ENCODE measurements at regions of chr5 and their contacts with region 1.

Region 1: DNA sequence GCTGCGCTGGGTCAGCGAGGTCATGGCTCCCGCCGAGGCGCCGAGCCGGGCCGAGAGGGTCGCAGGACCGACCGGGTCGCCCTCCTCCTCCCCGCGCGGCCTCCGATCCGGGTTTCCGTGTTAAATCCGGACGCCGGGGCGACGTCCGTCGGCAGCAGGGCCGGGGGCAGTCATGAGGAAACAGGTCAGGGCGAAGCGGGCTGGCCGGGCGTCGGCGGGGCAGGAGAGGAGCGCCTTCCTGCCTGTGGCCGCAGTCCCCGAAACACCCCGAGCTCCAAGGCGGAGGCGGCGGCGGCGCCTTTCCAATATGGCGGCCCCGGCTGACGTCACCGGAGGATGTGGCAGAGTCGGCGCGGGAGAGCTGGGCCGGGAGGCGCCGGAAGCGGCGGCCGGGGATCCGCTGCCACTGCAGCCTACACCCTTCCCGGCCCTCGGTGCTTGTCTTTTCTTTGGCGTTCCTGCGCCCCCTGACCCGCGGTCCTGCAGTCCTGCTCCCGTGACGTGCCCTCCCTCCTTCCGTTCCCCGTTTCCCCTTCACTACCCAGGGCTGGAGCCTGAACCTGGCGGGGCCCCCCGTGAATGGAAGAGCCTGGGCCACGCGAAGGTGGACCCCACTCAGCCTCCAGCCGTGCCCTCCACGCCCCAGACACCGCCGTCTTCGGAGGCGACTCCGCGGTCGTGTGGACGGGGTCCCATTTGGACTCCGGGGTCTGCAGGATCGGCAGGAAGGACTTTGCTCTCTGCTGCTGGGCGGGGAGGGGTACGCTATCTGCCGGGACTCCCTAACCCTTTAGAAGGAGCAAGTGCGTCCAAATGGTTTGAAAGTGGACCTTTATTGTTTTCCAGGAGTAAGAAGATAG is at the start of gene GOLPH3:
- DNase-seq: peak; percentile 87 to 96 (median 92)
- ATAC-seq: peak; percentile 94
- H3K4me3 ChIP-seq: peak within 1 kb of the TSS; percentile 87
- H3K4me3 Mint-ChIP-seq: peak within 1 kb of the TSS; percentile 85 to 100 (median 98)
- H3K27ac ChIP-seq: peak within 1 kb of the TSS; percentile 100
- H3K27ac Mint-ChIP-seq: peak within 1 kb of the TSS; percentile 94 to 99 (median 99)
- H3K4me1 ChIP-seq: peaks cover 5 to 8% of the 10 kb centered on the region in 2 donors
- H3K4me1 Mint-ChIP-seq: peaks cover 21 to 46% (median 34%) of the 10 kb centered on the region in 7 donors
- H3K27me3 ChIP-seq: no peaks in the 10 kb centered on the region
- H3K27me3 Mint-ChIP-seq: peaks cover 0 to 6% (median 3%) of the 10 kb centered on the region in 5 donors
- total RNA-seq, gene GOLPH3: 46.9 to 66.5 (median 60.1) TPM

Region 2: GRCh38 chr5:30991462-30991861 is 1182.8 kb before region 1 on chr5:
- CTCF ChIA-PET with region 1: no interaction called
- POLR2A ChIA-PET with region 1: no interaction called
- intact Hi-C with region 1: no loop called
- DNase-seq: no peak
- ATAC-seq: no peak
- H3K4me3 ChIP-seq: no peak overlapping the region
- H3K4me3 Mint-ChIP-seq: no peak overlapping the region
- H3K27ac ChIP-seq: no peak overlapping the region
- H3K27ac Mint-ChIP-seq: no peak overlapping the region
- H3K4me1 ChIP-seq: no peaks in the 10 kb centered on the region
- H3K4me1 Mint-ChIP-seq: no peaks in the 10 kb centered on the region
- H3K27me3 ChIP-seq: no peaks in the 10 kb centered on the region
- H3K27me3 Mint-ChIP-seq: no peaks in the 10 kb centered on the region

Region 3: DNA sequence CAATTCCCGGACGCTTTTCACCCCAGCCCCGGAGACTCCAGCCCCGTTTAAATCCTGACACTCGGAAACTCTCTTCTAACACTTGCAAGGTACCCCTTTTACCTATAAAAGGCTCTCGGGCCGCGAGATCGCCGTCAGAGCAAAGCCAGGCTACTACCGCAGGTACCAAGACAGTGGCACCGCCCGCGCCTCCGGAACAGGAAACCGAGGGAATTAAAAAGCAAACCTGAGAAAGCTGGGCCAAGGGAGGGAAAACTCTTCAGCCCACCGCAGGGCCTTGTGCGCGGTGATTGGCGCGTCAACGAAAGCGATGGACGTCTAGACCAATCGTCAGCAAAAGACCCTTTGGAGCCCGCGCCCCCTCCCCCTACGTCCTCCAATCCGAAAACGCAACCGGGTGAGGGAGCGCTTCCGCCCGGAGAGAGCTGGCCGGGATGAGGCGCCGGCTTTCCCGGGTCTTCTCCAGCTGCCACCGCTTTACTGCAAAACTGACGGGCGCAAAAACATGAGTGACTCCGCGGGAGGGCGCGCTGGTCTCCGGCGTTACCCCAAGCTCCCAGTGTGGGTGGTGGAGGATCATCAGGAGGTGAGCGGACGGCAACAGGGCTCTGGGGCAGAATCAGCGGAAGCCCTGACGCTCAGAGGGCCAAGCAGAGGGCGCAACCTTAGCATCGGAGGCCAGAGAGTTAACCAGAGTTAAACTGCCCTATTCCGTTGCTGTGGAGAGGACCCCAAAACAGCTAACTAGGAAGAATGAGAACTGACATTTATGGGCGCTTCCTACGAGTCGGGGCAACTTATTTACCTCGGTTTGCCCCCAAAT is 642.1 kb before region 1 on chr5 and contains the starts of genes C5orf22 and DROSHA:
- CTCF ChIA-PET with region 1: no interaction called
- POLR2A ChIA-PET with region 1: interaction called, 3 read pairs
- intact Hi-C with region 1: loop called (anchors 1 kb)
- DNase-seq: peak; percentile 72 to 90 (median 88)
- ATAC-seq: peak; percentile 99
- H3K4me3 ChIP-seq: peak within 1 kb of the TSS; percentile 97
- H3K4me3 Mint-ChIP-seq: peak within 1 kb of the TSS; percentile 93 to 100 (median 98)
- H3K27ac ChIP-seq: peak within 1 kb of the TSS; percentile 89
- H3K27ac Mint-ChIP-seq: peak within 1 kb of the TSS; percentile 83 to 96 (median 90)
- H3K4me1 ChIP-seq: peaks cover 13 to 24% of the 10 kb centered on the region in 2 donors
- H3K4me1 Mint-ChIP-seq: peaks cover 29 to 85% (median 73%) of the 10 kb centered on the region in 7 donors
- H3K27me3 ChIP-seq: no peaks in the 10 kb centered on the region
- H3K27me3 Mint-ChIP-seq: no peaks in the 10 kb centered on the region
- total RNA-seq, gene C5orf22: 10.6 to 31.3 (median 30.6) TPM
- total RNA-seq, gene DROSHA: 48.5 to 92.0 (median 75.7) TPM

Region 4: DNA sequence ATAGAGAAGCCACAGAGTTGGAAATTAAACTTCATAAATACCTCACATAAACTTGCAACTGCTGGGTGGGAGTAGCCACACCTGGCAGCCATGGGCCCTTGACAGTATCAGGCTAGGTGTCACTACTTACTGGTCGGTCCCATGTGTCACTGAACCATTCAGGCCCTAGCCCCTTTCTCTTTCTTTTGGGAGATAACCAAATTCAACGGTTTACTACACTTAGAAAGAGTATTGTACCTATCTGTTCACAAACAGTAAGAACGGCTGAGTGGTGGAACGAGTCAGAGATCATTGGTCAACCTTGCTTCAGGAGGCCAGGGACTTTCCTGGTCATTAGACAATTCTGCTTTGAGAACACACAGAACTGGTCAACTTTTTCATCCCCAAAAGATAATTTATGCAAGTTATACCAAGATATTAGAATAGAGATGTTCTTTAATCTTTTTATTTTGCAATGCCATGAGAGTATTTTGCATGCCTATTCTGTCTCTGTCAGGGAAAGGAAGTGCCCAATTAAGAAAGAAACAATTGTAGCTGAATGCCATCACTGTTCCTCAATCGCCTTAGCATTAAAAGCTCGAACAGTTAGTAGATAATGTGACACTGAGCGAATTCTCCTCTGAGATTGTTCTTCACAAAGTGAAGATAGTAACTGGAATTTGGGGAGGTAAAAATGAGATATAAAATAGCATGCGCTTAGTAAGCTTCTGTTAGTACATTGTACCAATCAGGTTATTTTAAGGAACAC is 51.0 kb before region 1 on chr5:
- CTCF ChIA-PET with region 1: no interaction called
- POLR2A ChIA-PET with region 1: no interaction called
- intact Hi-C with region 1: loop called (anchors 5 to 10 kb)
- DNase-seq: no peak
- ATAC-seq: no peak
- H3K4me3 ChIP-seq: no peak overlapping the region
- H3K4me3 Mint-ChIP-seq: no peak overlapping the region
- H3K27ac ChIP-seq: no peak overlapping the region
- H3K27ac Mint-ChIP-seq: peak overlapping the region in 3 of 9 donors; percentile 6 to 50 (median 7)
- H3K4me1 ChIP-seq: peaks cover 0 to 3% of the 10 kb centered on the region in 2 donors
- H3K4me1 Mint-ChIP-seq: peaks cover 9 to 30% (median 20%) of the 10 kb centered on the region in 7 donors
- H3K27me3 ChIP-seq: no peaks in the 10 kb centered on the region
- H3K27me3 Mint-ChIP-seq: no peaks in the 10 kb centered on the region

Region 5: GRCh38 chr5:32232441-32233219 is 58.4 kb after region 1 on chr5:
- CTCF ChIA-PET with region 1: interaction called, 3 read pairs
- POLR2A ChIA-PET with region 1: interaction called, 4 read pairs
- intact Hi-C with region 1: loop called (anchors 1 to 2 kb)
- DNase-seq: peak; percentile 45 to 73 (median 64)
- ATAC-seq: peak; percentile 88
- H3K4me3 ChIP-seq: no peak overlapping the region
- H3K4me3 Mint-ChIP-seq: no peak overlapping the region
- H3K27ac ChIP-seq: no peak overlapping the region
- H3K27ac Mint-ChIP-seq: peak overlapping the region; percentile 45 to 71 (median 62)
- H3K4me1 ChIP-seq: no peaks in the 10 kb centered on the region
- H3K4me1 Mint-ChIP-seq: peaks cover 0 to 12% (median 7%) of the 10 kb centered on the region in 7 donors
- H3K27me3 ChIP-seq: no peaks in the 10 kb centered on the region
- H3K27me3 Mint-ChIP-seq: no peaks in the 10 kb centered on the region

Region 6: GRCh38 chr5:32312647-32313523 is 138.6 kb after region 1 on chr5 and contains the start of gene MTMR12:
- CTCF ChIA-PET with region 1: no interaction called
- POLR2A ChIA-PET with region 1: interaction called, 11 read pairs
- intact Hi-C with region 1: loop called (anchors 1 kb)
- DNase-seq: peak; percentile 99 to 100 (median 100)
- ATAC-seq: peak; percentile 96
- H3K4me3 ChIP-seq: peak within 1 kb of the TSS; percentile 72
- H3K4me3 Mint-ChIP-seq: peak within 1 kb of the TSS; percentile 89 to 98 (median 92)
- H3K27ac ChIP-seq: peak within 1 kb of the TSS; percentile 79
- H3K27ac Mint-ChIP-seq: peak within 1 kb of the TSS; percentile 88 to 98 (median 95)
- H3K4me1 ChIP-seq: peaks cover 9 to 14% of the 10 kb centered on the region in 2 donors
- H3K4me1 Mint-ChIP-seq: peaks cover 30 to 43% (median 38%) of the 10 kb centered on the region in 7 donors
- H3K27me3 ChIP-seq: no peaks in the 10 kb centered on the region
- H3K27me3 Mint-ChIP-seq: no peaks in the 10 kb centered on the region
- total RNA-seq, gene MTMR12: 19.0 to 28.2 (median 24.0) TPM

Region 7: DNA sequence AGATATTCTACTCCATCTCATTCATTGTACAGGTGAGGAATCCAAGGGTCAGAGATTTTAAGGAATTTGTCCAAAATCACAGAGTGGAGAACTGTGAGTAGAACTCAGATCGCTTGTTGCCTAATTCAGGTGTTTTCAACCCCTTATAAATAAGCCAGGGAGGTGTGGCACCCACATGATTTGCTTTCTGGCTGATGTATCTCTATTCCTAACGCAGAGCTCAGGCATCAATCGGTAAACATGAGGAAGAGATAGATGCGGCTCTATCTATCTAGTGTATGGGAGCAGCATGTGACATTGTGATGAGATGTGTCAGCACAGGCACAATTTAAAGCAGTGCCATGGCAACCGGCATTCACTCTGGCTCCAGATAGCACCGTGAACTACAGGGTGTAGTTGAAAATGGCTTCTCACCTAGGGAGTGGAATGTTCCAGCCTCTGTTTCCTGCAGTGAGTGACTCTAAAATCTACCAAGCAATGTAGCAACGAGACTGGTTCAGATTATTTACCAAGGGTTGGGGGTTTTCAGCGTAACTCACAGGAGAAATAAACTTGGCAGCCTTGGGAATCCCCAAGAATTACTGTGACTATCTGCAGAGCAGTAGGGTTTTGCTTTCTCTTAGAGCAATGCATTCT is 357.8 kb after region 1 on chr5:
- CTCF ChIA-PET with region 1: no interaction called
- POLR2A ChIA-PET with region 1: no interaction called
- intact Hi-C with region 1: loop called in 1 of 2 experiments (anchors 2 kb)
- DNase-seq: peak in 8 of 9 donors; percentile 28 to 78 (median 53)
- ATAC-seq: peak; percentile 82
- H3K4me3 ChIP-seq: peak overlapping the region; percentile 56
- H3K4me3 Mint-ChIP-seq: peak overlapping the region; percentile 81 to 96 (median 88)
- H3K27ac ChIP-seq: peak overlapping the region; percentile 96
- H3K27ac Mint-ChIP-seq: peak overlapping the region; percentile 93 to 99 (median 95)
- H3K4me1 ChIP-seq: peaks cover 12 to 22% of the 10 kb centered on the region in 2 donors
- H3K4me1 Mint-ChIP-seq: peaks cover 8 to 70% (median 36%) of the 10 kb centered on the region in 7 donors
- H3K27me3 ChIP-seq: no peaks in the 10 kb centered on the region
- H3K27me3 Mint-ChIP-seq: no peaks in the 10 kb centered on the region

Region 8: GRCh38 chr5:32613050-32613672 is 438.9 kb after region 1 on chr5:
- CTCF ChIA-PET with region 1: no interaction called
- POLR2A ChIA-PET with region 1: no interaction called
- intact Hi-C with region 1: loop called in 1 of 2 experiments (anchors 5 kb)
- DNase-seq: peak; percentile 55 to 84 (median 75)
- ATAC-seq: peak; percentile 92
- H3K4me3 ChIP-seq: no peak overlapping the region
- H3K4me3 Mint-ChIP-seq: no peak overlapping the region
- H3K27ac ChIP-seq: no peak overlapping the region
- H3K27ac Mint-ChIP-seq: peak overlapping the region in 2 of 9 donors; percentile 6 to 20
- H3K4me1 ChIP-seq: no peaks in the 10 kb centered on the region
- H3K4me1 Mint-ChIP-seq: peaks cover 3 to 14% (median 6%) of the 10 kb centered on the region in 7 donors
- H3K27me3 ChIP-seq: no peaks in the 10 kb centered on the region
- H3K27me3 Mint-ChIP-seq: no peaks in the 10 kb centered on the region

Measured in naive thymus-derived CD4-positive, alpha-beta T cell (primary cell).